Adrenal gland (tissue), 19 donors: ENCODE measurements at regions of chr10 and their contacts with region 1.

Region 1: GRCh38 chr10:109889867-109890266 is 33.4 kb downstream of the XPNPEP1 start:
- DNase-seq: no peak
- H3K4me3 ChIP-seq: no peak overlapping the region
- H3K27ac ChIP-seq: no peak overlapping the region
- H3K4me1 ChIP-seq: peaks cover 26 to 33% of the 10 kb centered on the region in 2 donors
- H3K27me3 ChIP-seq: no peaks in the 10 kb centered on the region
- CTCF ChIP-seq: no peak
- POLR2A ChIP-seq: no peak

Region 2: DNA sequence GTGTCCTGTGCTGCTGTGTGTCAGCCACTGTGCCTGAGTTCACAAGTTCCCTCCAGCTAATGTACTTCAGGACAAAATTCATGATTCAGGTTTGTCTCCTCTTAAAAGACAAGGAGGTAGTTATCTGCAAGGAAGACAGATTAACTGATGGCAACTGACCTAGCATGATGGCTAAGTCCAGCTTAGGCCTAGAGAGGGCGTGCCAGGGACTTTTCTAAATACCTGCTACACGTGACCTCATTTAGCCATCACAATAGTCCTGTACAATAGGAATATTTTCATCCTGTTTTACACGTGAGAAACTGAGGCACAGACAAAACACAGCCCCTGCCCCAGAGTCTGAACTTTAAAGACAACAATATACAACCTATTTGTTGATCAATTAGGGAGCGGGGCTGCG is 242.2 kb before region 1 on chr10:
- intact Hi-C with region 1: no loop called
- DNase-seq: no peak
- H3K4me3 ChIP-seq: no peak overlapping the region
- H3K27ac ChIP-seq: no peak overlapping the region
- H3K4me1 ChIP-seq: no peaks in the 10 kb centered on the region
- H3K27me3 ChIP-seq: no peaks in the 10 kb centered on the region
- CTCF ChIP-seq: no peak
- POLR2A ChIP-seq: no peak

Region 3: DNA sequence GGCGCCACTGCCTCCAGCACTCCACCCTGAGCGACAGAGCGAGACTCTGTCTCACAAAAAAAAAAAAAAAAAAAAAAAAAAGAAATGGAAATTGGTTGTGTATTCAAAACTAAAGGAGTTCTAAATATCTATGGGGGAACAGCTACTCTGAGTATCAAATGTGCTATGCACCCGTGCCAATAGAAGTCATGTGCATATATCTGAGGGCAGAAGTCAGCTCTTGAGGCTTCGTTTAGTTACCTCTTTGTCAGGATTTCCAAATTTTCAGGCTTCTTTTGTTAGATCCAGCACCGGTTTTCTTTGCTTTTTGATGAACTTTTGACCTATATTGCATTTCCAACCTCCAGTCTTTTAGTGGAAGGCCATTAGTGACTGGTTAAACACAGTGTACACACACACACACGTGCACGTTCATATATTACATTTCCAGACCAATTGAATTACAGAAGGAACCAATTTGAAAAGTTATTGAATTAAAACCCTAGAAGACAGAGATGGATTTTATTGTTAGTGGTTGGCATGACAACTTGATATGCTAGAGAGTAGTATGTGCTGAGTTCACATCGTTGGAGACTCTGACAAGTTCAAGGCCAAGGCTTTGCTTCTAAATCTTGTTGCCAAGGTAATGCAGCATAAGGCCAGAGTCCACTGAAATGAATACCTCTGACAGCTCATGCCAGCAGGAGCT is 84.8 kb after region 1 on chr10:
- intact Hi-C with region 1: loop called in 1 of 2 experiments (anchors 5 kb)
- DNase-seq: peak in 4 of 7 donors; percentile 26 to 59 (median 43)
- H3K4me3 ChIP-seq: no peak overlapping the region
- H3K27ac ChIP-seq: no peak overlapping the region
- H3K4me1 ChIP-seq: peaks cover 2 to 25% of the 10 kb centered on the region in 2 donors
- H3K27me3 ChIP-seq: no peaks in the 10 kb centered on the region
- CTCF ChIP-seq: no peak
- POLR2A ChIP-seq: no peak

Region 4: DNA sequence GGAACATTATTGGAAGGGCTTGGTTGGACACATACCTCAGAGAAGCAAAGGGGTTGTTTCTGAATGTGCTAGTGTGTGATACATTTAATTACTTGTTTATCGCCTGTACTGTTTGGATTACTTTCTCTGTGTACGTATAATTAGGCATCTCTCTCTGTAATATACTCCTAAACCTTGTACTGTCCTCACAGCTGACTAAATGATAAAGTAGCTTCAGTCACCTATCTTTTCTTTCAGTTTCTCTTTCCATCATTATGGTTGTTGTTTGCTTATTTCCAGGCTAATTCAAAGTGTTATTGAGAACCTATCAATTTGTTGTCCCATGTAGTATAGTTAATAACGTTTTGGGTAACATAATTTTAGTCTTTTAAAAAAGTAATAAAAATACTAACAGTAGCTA is 351.5 kb after region 1 on chr10:
- intact Hi-C with region 1: no loop called
- DNase-seq: no peak
- H3K4me3 ChIP-seq: no peak overlapping the region
- H3K27ac ChIP-seq: peak overlapping the region in 1 of 5 donors; percentile 6
- H3K4me1 ChIP-seq: peaks cover 14 to 19% of the 10 kb centered on the region in 2 donors
- H3K27me3 ChIP-seq: no peaks in the 10 kb centered on the region
- CTCF ChIP-seq: no peak
- POLR2A ChIP-seq: no peak